Activated CD4-positive, alpha-beta T cell treated with anti-CD3 and anti-CD28 coated beads, Interleukin-2, amount 10 ng/mL, durations not matched to agents 24 days and 14 days (primary cell): ENCODE measurements at regions of chr1 and their contacts with region 1.

Region 1: GRCh38 chr1:9004700-9005394 is 21.4 kb downstream of the SLC2A7 start:
- DNase-seq: peak; percentile 97
- H3K4me3 Mint-ChIP-seq: no peak overlapping the region
- H3K27ac Mint-ChIP-seq: no peak overlapping the region
- H3K4me1 Mint-ChIP-seq: peaks cover 7% of the 10 kb centered on the region
- H3K27me3 Mint-ChIP-seq: peaks cover 2% of the 10 kb centered on the region

Region 2: GRCh38 chr1:8858888-8859706 is 145.8 kb before region 1 on chr1:
- intact Hi-C with region 1: loop called (anchors 2 kb)
- DNase-seq: peak; percentile 85
- H3K4me3 Mint-ChIP-seq: no peak overlapping the region
- H3K27ac Mint-ChIP-seq: peak overlapping the region; percentile 77
- H3K4me1 Mint-ChIP-seq: peaks cover 31% of the 10 kb centered on the region
- H3K27me3 Mint-ChIP-seq: no peaks in the 10 kb centered on the region

Region 3: GRCh38 chr1:8913111-8913856 is 91.6 kb before region 1 on chr1:
- intact Hi-C with region 1: loop called (anchors 1 kb)
- DNase-seq: no peak
- H3K4me3 Mint-ChIP-seq: no peak overlapping the region
- H3K27ac Mint-ChIP-seq: no peak overlapping the region
- H3K4me1 Mint-ChIP-seq: peaks cover 27% of the 10 kb centered on the region
- H3K27me3 Mint-ChIP-seq: no peaks in the 10 kb centered on the region

Region 4: DNA sequence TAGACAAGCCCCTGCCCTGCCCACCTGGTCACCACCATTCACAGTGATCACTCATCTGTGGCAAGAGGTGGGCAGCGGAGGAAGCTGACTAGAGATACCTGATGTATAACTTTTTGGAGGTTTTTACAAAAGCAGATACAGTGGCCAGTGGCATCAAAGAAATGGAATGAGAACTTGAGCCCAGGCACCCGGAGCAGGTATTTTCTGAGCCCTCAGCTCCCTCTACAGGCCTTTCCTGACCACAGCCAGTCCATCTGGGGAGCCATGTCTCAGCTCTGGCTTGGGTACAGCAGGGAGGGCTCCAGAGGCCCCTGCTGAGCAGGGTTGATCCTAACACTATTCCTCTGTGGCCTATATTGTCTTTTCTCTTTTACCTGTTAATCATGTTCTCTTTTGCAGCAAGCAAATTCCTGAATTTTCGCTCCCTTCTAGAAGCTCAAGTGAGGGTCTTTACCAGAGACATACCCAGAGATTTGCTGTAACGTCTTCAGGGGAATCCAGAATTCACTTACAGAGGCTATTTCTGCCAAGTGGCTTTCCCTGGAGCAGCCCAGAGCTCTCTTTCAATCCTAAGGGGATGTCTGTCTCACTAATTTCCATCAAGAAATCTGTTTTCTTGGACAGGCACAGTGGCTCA is 96.8 kb after region 1 on chr1:
- intact Hi-C with region 1: loop called (anchors 1 kb)
- DNase-seq: peak; percentile 82
- H3K4me3 Mint-ChIP-seq: no peak overlapping the region
- H3K27ac Mint-ChIP-seq: no peak overlapping the region
- H3K4me1 Mint-ChIP-seq: no peaks in the 10 kb centered on the region
- H3K27me3 Mint-ChIP-seq: no peaks in the 10 kb centered on the region

Region 5: DNA sequence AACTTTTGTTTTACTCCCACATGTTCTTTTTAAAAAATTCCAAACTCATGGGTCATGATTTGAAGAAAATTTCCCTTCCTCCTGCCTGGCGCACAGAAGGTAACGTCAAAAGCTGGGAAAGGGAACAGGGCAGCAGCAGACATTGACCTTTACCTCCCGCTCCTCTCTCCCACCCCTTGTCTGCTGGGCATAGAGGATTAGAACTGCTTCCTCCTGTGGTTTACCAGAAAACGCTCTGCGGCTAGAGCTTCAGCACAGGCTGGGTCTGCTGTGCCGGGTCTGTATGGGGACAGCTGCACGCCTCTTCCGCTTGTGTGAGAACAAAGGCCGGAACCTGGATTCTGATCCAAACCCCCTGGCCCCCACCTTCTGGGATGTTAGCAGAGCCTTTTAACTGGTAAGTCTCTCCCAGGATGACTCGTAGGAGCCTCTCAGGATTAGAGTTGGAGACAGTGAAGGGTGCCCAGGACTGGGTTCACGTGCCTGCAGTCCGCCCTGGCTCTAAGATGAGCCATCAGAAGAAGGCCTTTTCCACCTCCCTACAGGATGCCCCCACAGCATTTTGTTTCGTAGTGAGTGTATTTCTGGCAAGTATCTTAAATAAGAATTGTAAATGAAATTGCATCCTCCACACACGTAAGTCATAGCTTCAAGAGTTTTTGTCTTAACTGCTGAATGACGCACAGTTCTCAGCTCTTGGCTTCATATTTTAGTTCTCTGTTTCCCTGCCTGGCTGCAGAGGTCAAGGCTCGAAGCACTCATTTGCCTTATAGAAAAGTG is 235.0 kb after region 1 on chr1:
- intact Hi-C with region 1: no loop called
- DNase-seq: peak; percentile 89
- H3K4me3 Mint-ChIP-seq: peak overlapping the region; percentile 78
- H3K27ac Mint-ChIP-seq: peak overlapping the region; percentile 84
- H3K4me1 Mint-ChIP-seq: peaks cover 64% of the 10 kb centered on the region
- H3K27me3 Mint-ChIP-seq: no peaks in the 10 kb centered on the region